H1 (cell line): ENCODE measurements at regions of chr2 and their contacts with region 1.

Region 1: GRCh38 chr2:177523781-177524180 is 131.2 kb downstream of the AGPS start:
- DNase-seq: no peak
- H3K4me3 ChIP-seq: no peak overlapping the region
- H3K27ac ChIP-seq: no peak overlapping the region
- H3K4me1 ChIP-seq: peaks cover 0 to 5% (median 0%) of the 10 kb centered on the region in 4 experiments; a peak in 1 of 7 replicates
- H3K27me3 ChIP-seq: no peaks in the 10 kb centered on the region
- CTCF ChIP-seq: no peak
- EP300 ChIP-seq: no peak
- POLR2A ChIP-seq: no peak
- RAD21 ChIP-seq: no peak

Region 2: GRCh38 chr2:177489719-177490301 is 34.0 kb before region 1 on chr2:
- CTCF ChIA-PET with region 1: interaction called, 11 read pairs
- POLR2A ChIA-PET with region 1: no interaction called
- DNase-seq: no peak
- H3K4me3 ChIP-seq: no peak overlapping the region
- H3K27ac ChIP-seq: no peak overlapping the region
- H3K4me1 ChIP-seq: no peaks in the 10 kb centered on the region
- H3K27me3 ChIP-seq: no peaks in the 10 kb centered on the region
- CTCF ChIP-seq: peak in 2 of 3 experiments; percentile 29 to 38; a peak in 2 of 4 replicates
- EP300 ChIP-seq: no peak
- POLR2A ChIP-seq: no peak
- RAD21 ChIP-seq: peak; percentile 64 to 65